Activated CD4-positive, alpha-beta T cell treated with anti-CD3 and anti-CD28 coated beads, Interleukin-2, amount 10 ng/mL, durations not matched to agents 24 days and 14 days (primary cell): ENCODE measurements at regions of chr7 and their contacts with region 1.

Region 1: DNA sequence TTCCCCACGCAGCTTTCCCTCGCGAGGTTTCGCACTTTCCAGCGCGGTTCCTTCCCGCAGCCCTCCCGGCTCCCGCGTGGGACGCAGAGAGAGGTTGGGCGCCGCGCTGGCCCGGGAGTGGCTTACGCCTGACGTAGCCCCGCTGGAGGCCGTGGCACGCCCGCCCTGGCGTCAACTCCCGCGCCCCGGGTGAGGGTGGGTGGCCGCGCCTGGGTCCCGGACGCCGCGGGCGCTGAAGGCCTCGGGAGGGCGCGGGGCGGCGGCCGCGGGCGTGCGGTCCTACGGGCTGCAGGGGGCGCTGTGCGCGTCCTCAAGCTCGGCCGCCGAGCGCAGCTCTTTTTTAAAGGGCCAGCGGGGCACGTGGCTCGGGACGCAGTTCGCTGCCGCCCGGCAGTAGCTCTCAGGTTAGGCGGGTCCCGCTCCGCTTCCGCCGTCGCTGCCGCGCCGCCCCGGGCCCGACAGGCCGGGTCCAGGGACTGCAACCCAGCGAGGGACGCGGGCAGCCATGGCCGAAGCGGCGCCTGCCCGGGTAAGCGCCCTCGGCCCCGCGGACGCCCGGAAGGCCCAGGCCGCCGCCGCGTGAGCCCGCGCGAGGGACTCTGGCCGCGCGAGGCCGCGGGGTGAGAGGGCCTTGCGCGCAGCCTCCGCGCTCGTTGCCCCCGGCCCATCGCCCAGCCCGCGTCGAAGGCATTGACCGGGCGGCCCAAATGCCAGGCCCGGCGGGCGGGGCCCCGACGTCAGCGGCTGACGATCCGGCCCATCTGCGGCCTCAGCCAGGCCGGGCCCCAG is at the start of gene ZNF783:
- DNase-seq: peak; percentile 96
- H3K4me3 Mint-ChIP-seq: peak within 1 kb of the TSS; percentile 85
- H3K27ac Mint-ChIP-seq: peak within 1 kb of the TSS; percentile 97
- H3K4me1 Mint-ChIP-seq: peaks cover 22% of the 10 kb centered on the region
- H3K27me3 Mint-ChIP-seq: no peaks in the 10 kb centered on the region
- total RNA-seq, gene ZNF783: 27.2 and 27.4 TPM in 2 replicates

Region 2: GRCh38 chr7:149245244-149245643 is 16.8 kb before region 1 on chr7:
- intact Hi-C with region 1: loop called (anchors 1 kb)
- DNase-seq: no peak
- H3K4me3 Mint-ChIP-seq: peak overlapping the region; percentile 40
- H3K27ac Mint-ChIP-seq: peak overlapping the region; percentile 91
- H3K4me1 Mint-ChIP-seq: peaks cover 51% of the 10 kb centered on the region
- H3K27me3 Mint-ChIP-seq: no peaks in the 10 kb centered on the region

Region 3: GRCh38 chr7:149284850-149285626 is 23.0 kb after region 1 on chr7:
- intact Hi-C with region 1: loop called (anchors 2 kb)
- DNase-seq: peak; percentile 100
- H3K4me3 Mint-ChIP-seq: peak overlapping the region; percentile 83
- H3K27ac Mint-ChIP-seq: peak overlapping the region; percentile 58
- H3K4me1 Mint-ChIP-seq: peaks cover 32% of the 10 kb centered on the region
- H3K27me3 Mint-ChIP-seq: no peaks in the 10 kb centered on the region

Region 4: DNA sequence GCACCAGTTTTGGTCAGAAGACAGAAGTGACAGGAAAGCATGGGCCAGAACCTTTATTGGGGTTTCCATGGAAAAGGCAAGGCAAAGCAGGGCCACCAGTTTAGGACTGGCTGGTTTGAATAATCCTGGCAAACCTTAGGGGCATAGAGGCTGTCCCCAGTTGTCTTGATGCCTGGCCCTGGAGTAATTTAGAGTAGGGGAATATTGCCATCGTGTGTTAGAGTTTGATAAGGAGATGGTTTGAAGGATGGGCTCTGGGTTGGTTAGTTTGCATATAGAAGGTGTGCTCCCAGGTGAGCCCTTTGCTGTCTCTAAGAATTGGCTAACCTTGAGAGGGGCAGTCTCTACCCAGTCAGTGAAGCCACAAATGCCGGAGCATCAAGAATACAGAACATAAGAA is 119.2 kb after region 1 on chr7:
- intact Hi-C with region 1: no loop called
- DNase-seq: no peak
- H3K4me3 Mint-ChIP-seq: no peak overlapping the region
- H3K27ac Mint-ChIP-seq: no peak overlapping the region
- H3K4me1 Mint-ChIP-seq: no peaks in the 10 kb centered on the region
- H3K27me3 Mint-ChIP-seq: peaks cover 5% of the 10 kb centered on the region

Region 5: DNA sequence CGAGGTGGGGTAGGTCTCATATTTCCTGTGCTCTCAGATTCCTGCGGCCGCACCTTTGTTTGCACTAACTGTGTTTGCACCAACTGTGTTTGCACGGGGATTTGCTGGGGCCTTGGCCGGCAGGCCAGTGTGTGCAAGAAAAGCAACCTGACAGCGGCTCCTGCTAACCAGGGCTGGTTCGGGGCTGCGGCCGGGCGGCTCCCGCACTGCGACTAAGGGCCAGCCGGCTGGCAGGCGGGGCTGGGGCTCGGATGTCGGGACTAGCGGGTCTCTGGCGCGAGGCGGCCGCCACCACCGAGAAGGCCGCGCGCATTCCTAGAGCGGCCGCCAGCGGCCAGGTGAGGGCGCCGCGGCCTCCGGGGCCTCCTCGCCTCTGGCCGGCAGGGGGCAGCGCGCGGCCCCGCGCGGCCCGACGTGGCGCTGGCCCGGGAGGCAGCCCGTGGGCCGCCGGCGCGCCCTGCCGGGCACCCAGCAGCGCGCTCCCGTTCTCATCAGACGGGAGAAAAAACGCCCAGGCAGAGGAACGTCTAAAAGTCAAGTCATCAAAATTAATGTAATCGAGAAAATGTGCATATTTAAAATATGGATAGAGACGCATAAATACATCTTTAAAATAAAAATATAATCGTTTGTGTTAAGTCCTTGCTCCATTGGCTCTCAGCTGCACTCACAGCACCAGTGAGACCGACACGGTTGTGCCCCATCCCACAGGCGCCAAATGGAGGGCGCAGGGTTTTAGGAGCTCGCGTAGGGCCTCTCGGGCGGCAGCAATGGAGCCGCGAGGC is 160.3 kb after region 1 on chr7:
- intact Hi-C with region 1: loop called (anchors 1 kb)
- DNase-seq: peak; percentile 94
- H3K4me3 Mint-ChIP-seq: peak overlapping the region; percentile 79
- H3K27ac Mint-ChIP-seq: peak overlapping the region; percentile 66
- H3K4me1 Mint-ChIP-seq: peaks cover 5% of the 10 kb centered on the region
- H3K27me3 Mint-ChIP-seq: peaks cover 6% of the 10 kb centered on the region

Region 6: DNA sequence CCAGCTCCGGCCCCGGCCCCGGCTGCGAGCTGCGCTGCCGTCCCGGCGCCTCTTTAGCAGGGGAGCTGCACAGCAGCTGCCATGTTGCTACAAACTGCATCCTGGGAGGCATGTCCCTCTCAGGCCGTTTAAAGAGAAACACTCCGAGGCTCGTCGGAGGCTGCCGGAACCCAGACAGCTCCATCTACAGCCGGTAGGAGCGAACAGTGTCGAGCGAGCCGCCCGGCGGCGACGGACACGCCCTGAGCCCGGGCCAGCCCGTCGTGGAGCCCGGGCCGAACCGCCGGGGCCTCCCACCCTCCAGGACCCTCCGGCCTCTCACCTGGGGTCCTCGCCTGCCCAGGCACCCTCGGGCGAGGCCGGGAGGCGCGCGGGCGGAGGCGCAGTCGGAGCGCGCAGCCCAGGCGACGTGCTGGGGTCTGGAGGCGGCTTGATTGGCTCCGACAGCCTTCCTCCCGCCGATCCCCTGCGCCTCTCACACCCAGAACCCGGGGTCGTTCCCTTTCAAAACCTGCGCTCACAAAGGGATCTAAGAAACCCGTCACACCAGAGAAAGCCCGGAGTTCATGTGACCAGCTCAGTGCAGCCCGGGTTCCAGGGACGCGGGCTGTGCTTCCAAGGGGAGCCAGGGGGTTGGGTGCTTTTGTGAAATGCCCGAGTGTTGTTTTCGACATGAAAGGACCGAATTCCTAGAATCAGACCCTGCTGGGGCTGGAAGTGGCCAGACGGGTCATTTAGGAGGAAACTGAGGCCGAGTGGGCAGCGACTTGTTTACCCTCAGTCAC is 198.7 kb after region 1 on chr7 and contains the start of gene ZNF777:
- intact Hi-C with region 1: loop called (anchors 5 kb)
- DNase-seq: peak; percentile 95
- H3K4me3 Mint-ChIP-seq: peak within 1 kb of the TSS; percentile 87
- H3K27ac Mint-ChIP-seq: peak within 1 kb of the TSS; percentile 79
- H3K4me1 Mint-ChIP-seq: peaks cover 21% of the 10 kb centered on the region
- H3K27me3 Mint-ChIP-seq: peaks cover 25% of the 10 kb centered on the region
- total RNA-seq, gene ZNF777: 18.2 and 19.2 TPM in 2 replicates